Breast epithelium (tissue), 4 donors: ENCODE measurements at regions of chr12 and their contacts with region 1.

Region 1: DNA sequence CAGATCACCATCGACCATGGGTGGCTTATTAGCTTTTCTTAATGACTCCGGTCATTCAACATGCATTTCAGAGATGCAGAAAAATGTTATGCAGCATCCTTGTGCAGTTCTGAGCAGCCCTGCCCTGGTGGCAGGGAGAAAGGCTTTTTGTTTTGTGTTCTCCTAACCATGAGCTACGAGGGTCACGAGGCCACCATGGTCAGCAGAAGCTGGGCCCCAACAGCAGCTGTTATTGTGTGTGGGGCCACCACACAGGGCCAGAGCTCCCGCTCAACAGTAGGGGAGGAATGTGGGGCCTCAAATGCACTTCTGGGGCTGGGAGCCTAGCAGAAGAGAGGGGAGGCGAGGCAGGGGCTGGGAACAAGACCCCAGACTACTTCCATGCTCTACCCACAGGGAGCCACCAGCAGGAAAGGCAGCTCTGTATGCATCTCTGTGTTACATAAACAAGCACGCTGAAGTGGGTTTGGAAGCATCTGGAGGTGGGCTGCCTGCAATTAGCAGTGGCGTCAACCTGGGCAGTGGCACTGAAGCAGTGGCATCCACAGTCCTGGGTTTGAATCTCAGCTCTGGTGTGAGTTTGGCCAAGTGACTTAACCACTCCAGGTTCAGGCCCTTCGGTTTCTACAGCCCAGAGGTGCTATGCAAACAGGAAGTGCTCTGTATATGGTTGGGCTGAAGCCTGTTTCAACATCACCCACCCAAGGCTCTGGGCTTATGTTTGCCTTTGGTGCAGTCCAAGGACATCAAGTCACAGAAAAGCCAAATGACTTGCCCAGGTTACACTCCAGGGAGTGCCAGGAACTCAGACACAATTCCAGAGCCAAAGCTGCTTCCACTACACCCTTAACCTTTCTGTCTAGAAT is 16.3 kb downstream of the GLTP start:
- DNase-seq: peak in 1 of 2 donors; percentile 39
- H3K4me3 ChIP-seq: no peak overlapping the region
- H3K27ac ChIP-seq: peak overlapping the region; percentile 77 to 84
- H3K4me1 ChIP-seq: peaks cover 0 to 4% of the 10 kb centered on the region in 2 donors
- H3K27me3 ChIP-seq: no peaks in the 10 kb centered on the region
- CTCF ChIP-seq: no peak
- POLR2A ChIP-seq: no peak

Region 2: DNA sequence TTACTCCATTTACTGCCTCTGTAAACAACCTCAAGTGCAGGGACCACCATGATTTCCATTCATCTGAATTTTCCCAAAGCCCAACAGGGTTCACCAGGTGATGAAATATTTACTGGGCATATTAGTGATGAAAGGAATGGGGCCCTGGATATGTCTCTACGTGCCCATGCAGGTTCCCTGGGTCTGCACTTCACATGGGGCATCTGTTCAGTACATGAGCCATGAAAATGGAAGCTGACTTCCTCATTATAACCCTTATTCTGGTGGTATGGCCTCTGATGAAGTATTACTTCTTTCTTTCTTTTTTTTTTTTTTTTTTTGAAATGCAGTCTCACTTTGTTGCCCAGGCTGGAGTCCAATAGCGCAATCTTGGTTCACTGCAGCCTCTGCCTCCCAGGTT is 1106.2 kb before region 1 on chr12:
- intact Hi-C with region 1: no loop called
- DNase-seq: peak in 1 of 2 donors; percentile 48
- H3K4me3 ChIP-seq: no peak overlapping the region
- H3K27ac ChIP-seq: no peak overlapping the region
- H3K4me1 ChIP-seq: no peaks in the 10 kb centered on the region
- H3K27me3 ChIP-seq: no peaks in the 10 kb centered on the region
- CTCF ChIP-seq: no peak
- POLR2A ChIP-seq: no peak

Region 3: DNA sequence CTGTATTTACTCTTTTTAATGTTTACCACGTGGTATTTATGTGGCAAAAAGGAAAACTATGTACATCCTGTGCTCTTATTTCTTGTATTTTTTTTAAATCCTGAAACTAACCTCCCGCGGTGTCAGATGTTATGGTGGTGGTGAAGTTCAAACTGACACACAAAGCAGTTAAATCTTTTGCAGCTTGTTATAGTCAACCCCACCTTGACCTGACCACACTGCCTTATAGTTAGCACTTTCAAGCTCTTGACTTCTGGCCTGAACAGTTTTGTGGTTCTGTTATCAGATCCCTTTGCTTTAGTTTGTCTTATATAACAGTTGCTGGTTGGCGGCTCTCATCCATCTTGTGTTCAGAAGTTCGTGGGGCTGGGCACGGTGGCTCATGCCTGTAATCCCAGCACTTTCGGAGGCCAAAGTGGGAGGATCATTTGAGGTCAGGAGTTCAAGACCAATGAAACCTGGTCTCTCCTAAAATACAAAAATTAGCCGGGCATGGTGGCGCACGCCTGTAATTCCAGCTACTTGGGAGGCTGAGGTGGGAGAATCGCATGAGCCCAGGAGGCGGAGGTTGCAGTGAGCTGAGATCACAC is 764.6 kb before region 1 on chr12:
- intact Hi-C with region 1: loop called (anchors 10 kb)
- DNase-seq: peak in 1 of 2 donors; percentile 2
- H3K4me3 ChIP-seq: peak overlapping the region; percentile 80 to 86 (median 82)
- H3K27ac ChIP-seq: peak overlapping the region; percentile 87 to 92
- H3K4me1 ChIP-seq: peaks cover 5 to 11% of the 10 kb centered on the region in 2 donors
- H3K27me3 ChIP-seq: no peaks in the 10 kb centered on the region
- CTCF ChIP-seq: no peak
- POLR2A ChIP-seq: no peak

Region 4: GRCh38 chr12:110134691-110135411 is 270.8 kb after region 1 on chr12:
- intact Hi-C with region 1: no loop called
- DNase-seq: no peak
- H3K4me3 ChIP-seq: no peak overlapping the region
- H3K27ac ChIP-seq: no peak overlapping the region
- H3K4me1 ChIP-seq: no peaks in the 10 kb centered on the region
- H3K27me3 ChIP-seq: no peaks in the 10 kb centered on the region
- CTCF ChIP-seq: no peak
- POLR2A ChIP-seq: no peak